Activated B cell treated with CpG ODN at 0.5 μM for 24 hours (primary cell): ENCODE measurements at regions of chr3 and their contacts with region 1.

Region 1: DNA sequence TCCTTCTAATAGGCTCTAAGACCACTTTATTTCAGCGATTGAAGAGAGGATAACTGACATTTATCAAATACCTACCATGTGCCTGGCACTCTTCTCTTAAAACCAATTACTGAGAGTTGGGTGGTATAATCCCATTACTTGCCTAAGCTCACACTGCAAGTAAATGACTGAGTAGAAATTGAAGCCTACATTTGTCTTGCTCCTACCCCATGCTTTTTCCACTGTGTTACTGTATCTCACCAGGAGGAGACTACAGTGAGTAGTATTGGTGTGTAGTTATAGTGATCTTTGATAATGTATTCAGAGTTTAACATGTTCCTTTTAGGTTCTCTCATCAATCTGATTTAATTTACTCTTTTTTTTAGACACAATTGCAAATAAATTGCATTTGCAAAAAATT is 20.7 kb downstream of the EIF2A start:
- DNase-seq: no peak
- ATAC-seq: no peak
- H3K4me3 Mint-ChIP-seq: no peak overlapping the region
- H3K27ac Mint-ChIP-seq: no peak overlapping the region
- H3K4me1 Mint-ChIP-seq: no peaks in the 10 kb centered on the region
- H3K27me3 Mint-ChIP-seq: no peaks in the 10 kb centered on the region
- CTCF ChIP-seq: no peak

Region 2: GRCh38 chr3:150582620-150583019 is 15.3 kb after region 1 on chr3:
- CTCF ChIA-PET with region 1: no interaction called
- POLR2A ChIA-PET with region 1: no interaction called
- intact Hi-C with region 1: loop called (anchors 2 kb)
- DNase-seq: no peak
- ATAC-seq: no peak
- H3K4me3 Mint-ChIP-seq: no peak overlapping the region
- H3K27ac Mint-ChIP-seq: peak overlapping the region; percentile 12
- H3K4me1 Mint-ChIP-seq: peaks cover 7% of the 10 kb centered on the region
- H3K27me3 Mint-ChIP-seq: no peaks in the 10 kb centered on the region
- CTCF ChIP-seq: no peak

Region 3: DNA sequence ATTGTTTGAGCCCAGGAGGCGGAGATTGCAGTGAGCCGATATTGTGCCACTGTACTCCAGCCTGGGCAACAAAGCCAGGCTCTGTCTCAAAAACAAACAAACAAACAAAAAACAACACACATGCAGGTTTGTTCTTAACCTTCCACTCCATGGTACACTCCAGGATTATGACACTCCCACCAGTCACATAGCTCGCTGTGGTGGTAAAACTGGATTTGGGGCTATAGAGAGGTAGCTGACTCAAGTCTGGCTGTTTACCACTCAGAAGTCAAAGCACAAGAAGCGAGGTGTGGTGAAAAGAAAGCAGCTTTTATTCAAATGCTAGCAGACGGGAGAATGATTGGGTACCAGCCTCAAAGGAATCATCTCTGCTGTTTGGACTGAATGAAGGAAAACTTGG is 244.7 kb after region 1 on chr3:
- CTCF ChIA-PET with region 1: no interaction called
- POLR2A ChIA-PET with region 1: no interaction called
- intact Hi-C with region 1: no loop called
- DNase-seq: no peak
- ATAC-seq: no peak
- H3K4me3 Mint-ChIP-seq: no peak overlapping the region
- H3K27ac Mint-ChIP-seq: no peak overlapping the region
- H3K4me1 Mint-ChIP-seq: no peaks in the 10 kb centered on the region
- H3K27me3 Mint-ChIP-seq: peaks cover 10% of the 10 kb centered on the region
- CTCF ChIP-seq: no peak